ENCODE measurements at regions of chr16 and their contacts with region 1.

Region 1: DNA sequence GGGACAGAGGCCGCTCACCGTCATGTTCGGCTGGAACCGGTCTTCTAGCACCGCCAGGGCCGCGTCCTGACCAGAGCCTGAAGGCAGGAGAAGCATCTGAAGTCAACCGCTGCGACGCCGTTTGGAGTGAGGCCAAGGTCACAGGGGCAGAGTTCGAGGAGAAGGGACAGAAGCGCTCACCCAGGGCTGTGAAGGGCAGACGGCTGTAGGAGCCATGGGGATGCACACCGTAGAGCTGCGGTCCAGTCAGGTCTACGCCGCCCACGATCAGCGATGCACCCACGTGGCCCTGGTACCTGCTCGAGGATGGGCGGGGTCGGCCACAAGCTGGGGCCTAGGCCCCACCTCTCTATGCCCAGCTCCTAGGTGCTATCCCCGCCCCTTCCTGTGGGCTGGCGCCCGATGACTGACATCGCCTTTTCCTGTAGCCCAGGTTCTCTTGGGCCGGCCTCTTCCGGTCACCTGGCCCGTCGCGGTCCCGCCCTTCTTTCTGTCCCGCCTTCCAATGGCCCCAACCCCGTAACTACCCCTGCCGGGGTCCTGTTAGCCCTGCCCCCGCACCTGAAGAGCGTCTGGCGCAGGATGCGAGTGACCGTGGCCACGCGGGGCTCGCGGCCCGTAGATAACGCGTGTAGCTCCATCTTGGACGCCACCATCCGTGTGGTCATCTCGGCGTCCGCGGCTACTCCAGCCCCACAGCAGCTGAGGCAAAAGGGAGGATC is 1.1 kb downstream of the PSMB10 start:
- DNase-seq: peak; percentile 90 to 97 (median 95)
- H3K4me3 ChIP-seq: peak overlapping the region; percentile 97
- H3K4me3 Mint-ChIP-seq: peak overlapping the region; percentile 100
- H3K27ac ChIP-seq: peak overlapping the region; percentile 87
- H3K27ac Mint-ChIP-seq: peak overlapping the region; percentile 96 to 99 (median 98)
- H3K4me1 ChIP-seq: peaks cover 39% of the 10 kb centered on the region
- H3K4me1 Mint-ChIP-seq: peaks cover 34 to 54% (median 34%) of the 10 kb centered on the region in 3 donors
- H3K27me3 ChIP-seq: no peaks in the 10 kb centered on the region
- H3K27me3 Mint-ChIP-seq: peaks cover 0 to 3% of the 10 kb centered on the region in 2 donors

Region 2: DNA sequence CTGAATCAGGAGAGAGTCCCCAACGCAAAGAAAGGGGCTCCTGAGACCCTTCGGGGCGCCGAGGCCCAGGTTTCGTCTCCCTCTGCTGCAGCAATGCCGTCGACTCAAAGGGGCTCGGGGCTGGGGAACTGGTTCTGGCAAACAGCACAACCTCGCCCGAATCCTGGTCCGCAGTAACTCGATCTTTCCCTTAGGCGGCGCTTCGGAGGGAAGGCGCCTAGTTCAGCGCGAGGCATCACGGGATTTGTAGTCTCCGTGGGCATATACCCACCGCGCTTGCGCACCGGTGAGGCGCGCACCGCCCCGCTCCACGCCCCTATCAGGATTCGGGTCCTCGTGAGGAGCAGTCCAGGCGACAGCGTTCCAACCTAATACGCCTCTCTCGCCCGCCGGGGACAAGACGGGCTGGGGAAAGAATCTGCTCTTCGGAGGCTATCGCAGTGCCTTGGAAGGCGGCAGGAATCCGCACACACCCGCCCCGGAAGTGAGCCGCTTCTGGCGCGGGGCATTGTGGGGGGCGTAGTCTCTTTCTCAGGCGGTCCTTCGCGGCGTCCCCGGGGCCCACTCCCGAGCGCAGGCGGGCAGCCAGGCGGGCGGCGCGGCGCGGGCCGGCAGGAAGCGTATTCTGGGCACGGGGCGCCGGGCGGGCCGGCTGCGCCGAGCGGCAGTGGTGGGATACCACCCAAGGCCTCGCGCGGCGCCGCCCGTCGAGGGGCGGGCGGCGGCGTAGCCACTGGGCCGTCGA is 93.6 kb before region 1 on chr16 and contains the start of gene THAP11:
- CTCF ChIA-PET with region 1: interaction called, 3 read pairs
- POLR2A ChIA-PET with region 1: interaction called, 12 read pairs
- DNase-seq: peak; percentile 89 to 97 (median 95)
- H3K4me3 ChIP-seq: peak within 1 kb of the TSS; percentile 99
- H3K4me3 Mint-ChIP-seq: peak within 1 kb of the TSS; percentile 94 to 99 (median 96)
- H3K27ac ChIP-seq: peak within 1 kb of the TSS; percentile 90
- H3K27ac Mint-ChIP-seq: peak within 1 kb of the TSS; percentile 95 to 99 (median 98)
- H3K4me1 ChIP-seq: peaks cover 41% of the 10 kb centered on the region
- H3K4me1 Mint-ChIP-seq: peaks cover 33 to 43% (median 39%) of the 10 kb centered on the region in 3 donors
- H3K27me3 ChIP-seq: no peaks in the 10 kb centered on the region
- H3K27me3 Mint-ChIP-seq: no peaks in the 10 kb centered on the region
- total RNA-seq, gene THAP11: 52.6 to 55.1 TPM